PC-3 (cell line): ENCODE measurements at regions of chr18 and their contacts with region 1.

Region 1: GRCh38 chr18:50111265-50111792 is 83.6 kb downstream of the MYO5B start:
- DNase-seq: peak; percentile 11
- ATAC-seq: no peak
- H3K4me3 ChIP-seq: no peak overlapping the region
- H3K27ac ChIP-seq: no peak overlapping the region
- H3K4me1 ChIP-seq: no peaks in the 10 kb centered on the region
- H3K27me3 ChIP-seq: no peaks in the 10 kb centered on the region
- CTCF ChIP-seq: no peak; the same call in 1 of the 2 replicates

Region 2: GRCh38 chr18:50158923-50159653 is 47.8 kb after region 1 on chr18:
- CTCF ChIA-PET with region 1: no interaction called
- POLR2A ChIA-PET with region 1: no interaction called
- intact Hi-C with region 1: loop called (anchors 5 kb)
- DNase-seq: peak; percentile 79
- ATAC-seq: peak; percentile 51
- H3K4me3 ChIP-seq: no peak overlapping the region
- H3K27ac ChIP-seq: peak overlapping the region; percentile 88
- H3K4me1 ChIP-seq: peaks cover 65% of the 10 kb centered on the region
- H3K27me3 ChIP-seq: no peaks in the 10 kb centered on the region
- CTCF ChIP-seq: no peak